ENCODE measurements at regions of chr6 and their contacts with region 1.

Region 1: DNA sequence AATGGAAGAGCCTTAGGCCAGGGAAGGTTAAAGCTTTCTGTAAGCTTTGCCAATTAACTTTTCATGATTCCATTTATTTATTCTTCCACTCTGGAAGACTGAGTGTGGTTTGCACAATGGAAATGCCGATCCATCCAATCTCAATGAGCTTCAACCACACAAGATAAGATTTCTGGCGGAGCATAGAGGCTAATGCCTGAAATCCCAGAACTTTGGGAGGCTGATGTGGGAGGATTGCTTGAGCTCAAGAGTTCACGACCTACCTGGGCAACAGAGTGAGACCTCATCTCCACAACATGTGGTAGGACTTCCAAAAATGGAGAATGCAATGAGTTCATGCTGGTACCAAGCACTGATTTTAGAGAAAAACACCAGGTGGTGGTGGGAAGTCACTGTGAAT is 6.2 kb downstream of the ENPP1 start:
- DNase-seq: no peak
- ATAC-seq: no peak

Region 2: GRCh38 chr6:131694831-131695426 is 119.1 kb before region 1 on chr6:
- intact Hi-C with region 1: no loop called
- DNase-seq: peak; percentile 62
- ATAC-seq: peak; percentile 92

Region 3: GRCh38 chr6:131787766-131788712 is 26.0 kb before region 1 on chr6:
- intact Hi-C with region 1: loop called (anchors 2 kb)
- DNase-seq: no peak
- ATAC-seq: peak; percentile 82

Region 4: GRCh38 chr6:131844243-131844841 is 30.4 kb after region 1 on chr6:
- intact Hi-C with region 1: no loop called
- DNase-seq: no peak
- ATAC-seq: no peak